Ovary (tissue), 10 donors: ENCODE measurements at regions of chr15 and their contacts with region 1.

Region 1: DNA sequence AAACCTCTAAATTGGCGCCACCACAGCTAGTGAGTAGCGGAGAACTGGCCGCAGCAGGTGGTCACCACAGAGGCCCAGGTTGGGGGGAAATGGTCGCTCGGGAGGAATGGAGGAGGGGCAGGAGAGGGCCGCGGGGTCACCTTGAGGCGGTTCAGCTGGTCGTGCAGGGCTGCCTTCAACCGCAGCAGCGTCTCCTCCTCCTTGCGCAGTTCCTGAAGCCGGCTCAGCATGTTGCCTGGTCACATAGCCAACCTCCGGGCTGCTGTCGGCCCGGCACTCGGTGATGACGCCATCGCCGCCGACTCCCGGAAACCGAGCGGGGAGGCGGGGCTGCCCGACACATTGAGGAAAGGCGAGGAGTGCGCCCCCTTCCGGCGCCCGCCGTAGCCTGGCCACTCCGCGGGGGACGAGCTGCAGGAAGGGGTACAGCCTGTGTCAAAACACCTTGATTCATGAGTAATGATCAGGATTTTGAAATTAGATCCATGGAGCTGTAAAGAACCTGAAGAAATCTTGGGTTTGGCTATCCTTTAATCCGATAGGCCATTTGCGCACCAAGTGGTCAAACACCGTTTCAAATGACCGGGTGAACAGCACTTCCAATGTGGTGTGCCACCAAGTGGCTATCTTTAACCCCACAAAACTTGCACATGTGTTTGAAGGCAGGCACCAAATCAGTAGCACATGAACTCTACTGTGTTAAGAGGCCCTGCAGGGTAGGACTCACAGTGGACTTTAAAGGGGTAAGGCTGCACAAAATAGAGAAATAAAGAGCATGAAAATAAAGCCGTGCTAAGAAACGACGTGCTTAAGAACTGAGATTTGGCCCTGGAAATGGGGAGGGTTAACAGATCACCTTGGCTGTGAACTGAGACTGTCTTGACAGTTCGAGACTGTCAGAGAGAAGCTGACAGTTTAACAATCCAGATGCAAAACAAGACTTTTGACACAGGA is at the start of gene SNAPC5:
- DNase-seq: peak; percentile 94 to 98 (median 96)
- H3K4me3 ChIP-seq: peak within 1 kb of the TSS; percentile 89
- H3K27ac ChIP-seq: peak within 1 kb of the TSS; percentile 15 to 62
- H3K4me1 ChIP-seq: peaks cover 2% of the 10 kb centered on the region
- H3K27me3 ChIP-seq: no peaks in the 10 kb centered on the region
- CTCF ChIP-seq: peak; percentile 96 to 98 (median 97)
- EP300 ChIP-seq: no peak
- POLR2A ChIP-seq: peak; percentile 60
- total RNA-seq, gene SNAPC5: 14.6 to 33.4 (median 28.2) TPM

Region 2: DNA sequence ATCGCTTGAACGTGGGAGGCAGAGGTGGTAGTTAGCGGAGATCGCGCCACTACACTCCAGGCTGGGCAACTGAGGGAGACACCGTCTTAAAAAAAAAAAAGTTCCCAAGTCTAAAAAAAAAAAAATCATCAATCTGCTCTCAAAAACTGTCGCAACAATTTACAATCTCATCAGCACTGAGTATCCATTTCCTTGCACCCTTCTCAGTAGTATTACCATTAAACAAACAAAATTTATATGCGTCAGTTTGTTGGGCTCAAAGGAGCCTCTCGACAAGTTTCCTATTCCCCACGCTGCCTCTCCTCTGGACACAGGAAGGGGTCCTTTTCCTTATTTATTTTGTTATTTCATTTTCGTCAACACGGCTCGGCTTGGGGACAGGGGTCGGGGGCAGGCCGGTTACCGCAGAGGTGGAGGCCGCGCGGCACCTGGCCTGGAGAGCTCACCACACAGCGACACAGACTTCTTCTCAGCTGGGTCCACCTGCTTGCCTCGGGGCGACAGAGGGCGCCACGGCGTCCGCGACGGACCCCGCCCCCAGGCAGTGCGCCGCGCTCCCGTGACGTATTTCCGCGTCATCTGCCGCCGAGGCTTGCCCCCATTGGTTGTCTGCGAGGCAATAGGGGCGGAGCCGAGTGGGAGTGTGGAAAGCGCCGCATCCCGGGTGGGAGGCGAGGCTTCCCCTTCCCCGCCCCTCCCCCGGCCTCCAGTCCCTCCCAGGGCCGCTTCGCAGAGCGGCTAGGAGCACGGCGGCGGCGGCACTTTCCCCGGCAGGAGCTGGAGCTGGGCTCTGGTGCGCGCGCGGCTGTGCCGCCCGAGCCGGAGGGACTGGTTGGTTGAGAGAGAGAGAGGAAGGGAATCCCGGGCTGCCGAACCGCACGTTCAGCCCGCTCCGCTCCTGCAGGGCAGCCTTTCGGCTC is 111.3 kb before region 1 on chr15 and contains the start of gene MAP2K1:
- intact Hi-C with region 1: loop called (anchors 2 to 5 kb)
- DNase-seq: peak; percentile 99
- H3K4me3 ChIP-seq: peak within 1 kb of the TSS; percentile 81
- H3K27ac ChIP-seq: peak within 1 kb of the TSS; percentile 63 to 96
- H3K4me1 ChIP-seq: peaks cover 5% of the 10 kb centered on the region
- H3K27me3 ChIP-seq: no peaks in the 10 kb centered on the region
- CTCF ChIP-seq: peak; percentile 59 to 85 (median 74)
- EP300 ChIP-seq: no peak
- POLR2A ChIP-seq: peak; percentile 52
- total RNA-seq, gene MAP2K1: 21.6 to 44.8 (median 35.6) TPM